Right cardiac atrium (tissue), 5 donors: ENCODE measurements at regions of chr11 and their contacts with region 1.

Region 1: DNA sequence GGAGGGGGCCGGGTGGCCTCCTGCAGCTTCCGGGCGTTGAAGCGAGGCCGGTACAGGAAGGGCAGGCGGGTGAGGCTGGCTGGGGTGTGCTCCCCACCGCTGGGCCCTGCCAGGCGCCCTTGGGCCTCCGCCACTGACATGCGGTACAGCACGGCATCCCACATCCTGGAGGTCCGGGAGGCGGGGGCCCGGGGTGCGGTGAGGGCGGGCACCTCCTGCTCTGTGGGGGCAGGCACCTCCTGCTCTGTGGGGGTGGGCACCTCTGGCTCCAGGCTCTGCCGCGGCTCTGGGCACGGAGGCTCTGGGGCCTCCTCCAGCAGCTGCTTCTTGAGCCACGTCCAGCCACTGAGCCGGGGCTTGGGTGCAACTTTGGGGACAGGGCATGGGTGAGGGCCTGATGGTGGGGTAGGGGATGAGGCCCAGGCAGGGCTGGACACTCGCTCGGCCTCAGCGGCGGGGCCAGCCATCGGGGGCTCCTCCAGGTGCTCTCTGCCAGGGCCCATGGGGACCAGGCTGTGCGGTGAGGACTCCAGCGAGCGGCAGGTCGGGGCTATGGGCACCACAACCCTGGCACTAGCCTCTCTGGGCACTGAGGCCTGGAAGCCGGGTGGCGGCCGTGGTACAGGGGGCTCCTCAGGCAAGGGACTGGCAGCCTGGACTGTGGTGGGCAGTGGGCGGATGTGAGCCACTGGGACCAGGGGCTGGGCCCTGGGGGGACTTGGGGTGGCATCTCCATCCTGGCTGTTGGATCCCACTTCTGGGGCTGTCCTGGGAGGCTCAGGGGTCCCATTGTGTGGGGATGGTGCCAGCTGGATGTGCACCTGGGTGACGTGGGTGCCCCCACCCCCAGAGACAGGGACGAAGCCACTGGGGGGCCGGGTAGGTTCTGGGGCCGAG is 2.2 kb downstream of the PRR33 start:
- DNase-seq: peak in 2 of 3 donors; percentile 78 to 84
- ATAC-seq: peak; percentile 23 to 30
- H3K4me3 ChIP-seq: no peak overlapping the region
- H3K27ac ChIP-seq: no peak overlapping the region
- H3K4me1 ChIP-seq: no peaks in the 10 kb centered on the region
- H3K27me3 ChIP-seq: no peaks in the 10 kb centered on the region

Region 2: DNA sequence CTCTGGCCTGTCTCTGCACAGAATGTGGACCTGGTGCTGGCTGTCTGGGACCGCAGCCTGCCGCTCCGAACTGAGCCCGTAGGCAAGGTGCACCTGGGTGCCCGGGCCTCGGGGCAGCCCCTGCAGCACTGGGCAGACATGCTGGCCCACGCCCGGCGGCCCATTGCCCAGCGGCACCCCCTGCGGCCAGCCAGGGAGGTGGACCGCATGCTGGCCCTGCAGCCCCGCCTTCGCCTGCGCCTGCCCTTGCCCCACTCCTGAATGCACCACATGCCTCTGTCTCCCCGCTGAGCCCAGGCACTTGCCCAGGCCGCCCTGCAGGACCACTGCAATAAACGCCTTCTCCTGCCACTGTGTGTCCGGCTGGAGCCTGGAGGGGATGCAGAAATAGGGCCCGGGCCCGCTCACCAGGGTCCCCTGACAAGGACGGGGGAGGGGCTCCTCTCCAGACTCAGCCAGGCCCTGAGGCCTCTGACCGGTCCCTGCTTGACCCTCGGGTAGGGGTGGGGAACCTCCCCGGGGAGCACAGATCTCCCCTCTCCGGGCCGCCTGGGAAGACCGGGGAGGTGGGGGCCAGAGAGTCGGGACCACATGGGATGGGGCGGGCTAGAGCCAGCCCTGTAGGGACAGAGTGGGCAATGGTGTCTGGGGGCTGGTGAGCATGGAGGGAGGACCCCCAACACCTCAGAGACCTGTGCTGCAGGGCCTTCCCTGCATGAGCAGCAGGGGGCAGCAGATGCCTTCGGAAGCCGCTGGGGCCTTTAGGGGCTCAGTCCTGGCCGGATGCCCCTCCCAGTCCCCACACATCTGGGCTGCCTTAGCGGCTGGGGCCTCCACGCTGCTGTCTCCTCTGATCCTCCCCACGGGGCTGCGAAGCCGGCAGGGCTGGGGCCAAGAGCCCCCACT is 52.0 kb before region 1 on chr11:
- intact Hi-C with region 1: loop called in 2 of 4 experiments (anchors 5 to 10 kb)
- DNase-seq: peak; percentile 73 to 89 (median 89)
- ATAC-seq: peak; percentile 32 to 55
- H3K4me3 ChIP-seq: no peak overlapping the region
- H3K27ac ChIP-seq: no peak overlapping the region
- H3K4me1 ChIP-seq: no peaks in the 10 kb centered on the region
- H3K27me3 ChIP-seq: no peaks in the 10 kb centered on the region

Region 3: DNA sequence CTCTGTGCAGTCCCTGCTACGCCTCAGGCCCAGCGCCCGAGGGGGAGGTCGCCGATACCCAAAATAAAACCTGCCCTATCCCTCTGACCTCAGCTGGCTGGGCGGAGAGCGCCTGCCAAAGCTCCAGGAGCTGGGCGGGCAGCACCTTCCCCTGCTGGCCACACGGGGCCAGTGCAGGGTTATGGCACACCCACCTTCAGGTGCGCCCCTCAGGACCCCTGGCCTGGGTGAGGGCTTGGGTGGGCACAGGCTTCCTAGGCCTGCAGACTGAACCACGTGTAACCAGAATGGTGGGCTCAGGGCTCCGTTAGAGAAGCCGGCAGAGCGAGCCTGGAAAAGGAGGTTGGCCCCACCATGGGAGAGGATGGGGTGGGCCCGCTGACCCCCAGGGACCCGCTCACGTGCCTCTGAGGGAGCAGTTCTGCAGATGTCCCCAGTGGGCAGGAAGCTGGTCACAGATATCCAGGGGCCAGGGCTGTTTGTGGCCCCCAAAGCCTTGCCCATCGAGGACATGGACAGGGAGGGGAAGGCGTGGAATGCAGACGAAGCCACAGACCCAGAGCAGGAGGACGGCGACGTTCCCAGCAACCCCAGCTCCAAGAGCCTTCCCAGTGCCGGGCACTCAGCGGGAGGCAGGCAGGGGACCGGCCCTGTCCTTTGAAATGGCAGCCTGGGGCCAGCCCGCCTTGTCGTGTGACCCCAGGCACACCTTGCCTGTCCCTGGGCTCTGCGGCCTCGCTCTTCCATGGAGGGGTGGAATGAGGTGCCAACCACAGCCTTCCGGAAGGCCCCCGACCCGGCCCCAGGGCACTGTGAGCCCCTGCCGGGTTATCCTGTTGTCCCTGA is 28.4 kb after region 1 on chr11:
- intact Hi-C with region 1: loop called (anchors 1 kb)
- DNase-seq: peak in 1 of 3 donors; percentile 68
- ATAC-seq: peak; percentile 16 to 30
- H3K4me3 ChIP-seq: no peak overlapping the region
- H3K27ac ChIP-seq: no peak overlapping the region
- H3K4me1 ChIP-seq: peaks cover 4% of the 10 kb centered on the region
- H3K27me3 ChIP-seq: no peaks in the 10 kb centered on the region

Region 4: DNA sequence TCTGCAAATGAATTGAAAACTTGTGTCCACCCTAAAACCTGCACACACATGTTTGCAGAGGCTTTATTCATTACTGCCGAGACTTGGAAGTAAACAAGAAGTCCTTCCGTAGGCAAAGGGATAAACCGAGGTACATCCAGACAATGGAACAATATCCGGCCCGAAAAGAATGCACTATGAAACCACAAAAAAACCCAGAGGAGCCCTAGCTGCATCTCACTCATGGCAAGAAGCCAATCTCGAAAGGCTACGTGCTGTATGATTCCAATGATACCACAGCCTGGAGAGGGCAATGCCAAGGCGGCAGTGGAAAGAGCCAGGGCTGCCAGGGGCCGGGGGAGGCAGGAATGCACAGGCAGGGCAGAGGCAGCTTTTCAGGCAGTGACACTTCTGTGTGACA is 54.5 kb after region 1 on chr11:
- intact Hi-C with region 1: loop called in 3 of 4 experiments (anchors 1 to 10 kb)
- DNase-seq: peak in 1 of 3 donors; percentile 40
- ATAC-seq: no peak
- H3K4me3 ChIP-seq: no peak overlapping the region
- H3K27ac ChIP-seq: peak overlapping the region; percentile 16
- H3K4me1 ChIP-seq: no peaks in the 10 kb centered on the region
- H3K27me3 ChIP-seq: no peaks in the 10 kb centered on the region